ENCODE measurements at regions of chr1 and their contacts with region 1.

Region 1: DNA sequence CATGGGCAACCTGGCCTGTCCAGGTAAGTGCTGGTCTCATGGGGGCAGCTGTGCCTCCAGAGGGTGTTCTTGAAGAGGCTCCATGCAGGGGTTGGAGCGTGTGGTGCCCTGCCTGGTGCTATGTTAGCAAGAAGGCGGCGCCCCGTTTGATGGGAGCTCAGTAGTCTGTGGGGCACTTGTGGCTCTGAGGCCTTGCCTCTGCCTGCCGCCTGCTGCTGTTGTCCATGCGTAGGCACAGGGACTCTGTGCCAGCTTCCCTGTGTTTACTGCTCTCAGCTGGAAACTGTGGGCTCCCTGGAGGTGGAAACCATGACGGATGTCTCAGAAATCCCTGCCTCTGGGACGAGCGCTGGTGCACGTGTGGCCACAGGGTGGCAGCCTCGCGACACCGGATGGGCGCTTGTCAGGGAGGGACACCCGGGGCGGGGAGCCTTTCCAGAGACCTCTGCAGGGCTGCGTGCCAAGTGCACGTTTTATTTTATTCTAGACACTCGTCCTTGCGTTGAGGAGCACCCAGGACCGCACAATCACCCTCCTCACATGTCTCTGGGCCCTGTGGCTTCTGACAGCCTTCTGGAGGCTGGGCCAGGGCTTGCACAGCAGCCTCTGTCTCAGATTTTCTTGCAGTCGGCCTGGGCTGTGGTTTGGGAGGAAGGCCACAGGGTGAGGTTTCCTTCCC is 27.1 kb downstream of the SNAP47 start:
- DNase-seq: peak; percentile 87 to 92 (median 88)
- H3K4me3 ChIP-seq: peak overlapping the region; percentile 20 to 41
- H3K4me3 Mint-ChIP-seq: peak overlapping the region; percentile 60 to 89 (median 76)
- H3K27ac ChIP-seq: peak overlapping the region; percentile 46
- H3K27ac Mint-ChIP-seq: peak overlapping the region; percentile 89 to 95 (median 92)
- H3K4me1 ChIP-seq: peaks cover 89% of the 10 kb centered on the region
- H3K4me1 Mint-ChIP-seq: peaks cover 66 to 97% (median 77%) of the 10 kb centered on the region in 4 donors
- H3K27me3 ChIP-seq: no peaks in the 10 kb centered on the region
- H3K27me3 Mint-ChIP-seq: no peaks in the 10 kb centered on the region

Region 2: GRCh38 chr1:227778401-227778947 is 16.1 kb after region 1 on chr1:
- CTCF ChIA-PET with region 1: interaction called, 11 read pairs
- POLR2A ChIA-PET with region 1: interaction called, 10 read pairs
- intact Hi-C with region 1: no loop called
- DNase-seq: no peak
- H3K4me3 ChIP-seq: no peak overlapping the region
- H3K4me3 Mint-ChIP-seq: no peak overlapping the region
- H3K27ac ChIP-seq: no peak overlapping the region
- H3K27ac Mint-ChIP-seq: no peak overlapping the region
- H3K4me1 ChIP-seq: peaks cover 14% of the 10 kb centered on the region
- H3K4me1 Mint-ChIP-seq: peaks cover 11 to 23% (median 16%) of the 10 kb centered on the region in 4 donors
- H3K27me3 ChIP-seq: no peaks in the 10 kb centered on the region
- H3K27me3 Mint-ChIP-seq: no peaks in the 10 kb centered on the region

Region 3: DNA sequence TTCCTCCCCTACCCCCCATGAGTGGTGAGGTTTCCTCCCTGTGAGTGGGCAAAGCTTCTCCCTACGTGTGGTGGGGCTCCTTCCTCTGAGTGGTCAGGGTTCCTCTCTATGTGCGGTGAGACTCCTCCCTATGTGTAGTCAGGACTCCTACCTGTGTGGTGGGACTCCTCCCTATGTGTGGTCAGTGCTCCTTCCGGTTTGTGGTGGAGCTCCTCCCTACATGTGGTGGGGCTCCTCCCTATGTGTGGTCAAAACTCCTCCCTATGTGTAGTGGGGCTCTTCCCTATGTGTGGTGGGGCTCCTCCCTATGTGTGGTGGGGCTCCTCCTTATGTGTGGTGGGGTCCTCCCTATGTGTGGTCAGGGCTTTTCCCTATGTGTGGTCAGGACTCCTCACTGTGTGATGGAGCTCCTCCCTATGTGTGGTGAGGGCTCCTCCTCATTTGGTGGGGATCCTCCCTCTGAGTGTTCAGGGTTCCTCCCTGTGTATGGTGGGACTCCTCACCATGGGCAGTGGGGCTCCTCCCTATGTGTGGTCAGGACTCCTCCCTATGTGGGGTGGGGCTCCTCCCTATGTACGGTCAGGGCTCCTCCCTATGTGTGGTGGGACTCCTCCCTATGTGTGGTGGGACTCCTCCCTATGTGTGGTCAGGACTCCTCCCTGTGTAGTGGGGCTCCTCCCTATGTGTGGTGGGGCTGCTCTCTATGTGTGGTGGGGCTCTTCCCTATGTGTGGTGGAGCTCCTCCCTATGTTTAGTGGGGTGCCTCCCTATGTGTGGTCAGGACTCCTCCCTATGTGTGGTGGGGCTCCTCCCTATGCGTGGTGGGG is 82.2 kb after region 1 on chr1:
- CTCF ChIA-PET with region 1: interaction called, 18 read pairs
- POLR2A ChIA-PET with region 1: interaction called, 3 read pairs
- intact Hi-C with region 1: loop called (anchors 5 kb)
- DNase-seq: peak in 1 of 5 donors; percentile 4
- H3K4me3 ChIP-seq: no peak overlapping the region
- H3K4me3 Mint-ChIP-seq: no peak overlapping the region
- H3K27ac ChIP-seq: no peak overlapping the region
- H3K27ac Mint-ChIP-seq: peak overlapping the region in 5 of 7 donors; percentile 18 to 55 (median 47)
- H3K4me1 ChIP-seq: no peaks in the 10 kb centered on the region
- H3K4me1 Mint-ChIP-seq: peaks cover 0 to 4% (median 3%) of the 10 kb centered on the region in 4 donors
- H3K27me3 ChIP-seq: no peaks in the 10 kb centered on the region
- H3K27me3 Mint-ChIP-seq: peaks cover 1 to 3% of the 10 kb centered on the region in 2 donors

Region 4: DNA sequence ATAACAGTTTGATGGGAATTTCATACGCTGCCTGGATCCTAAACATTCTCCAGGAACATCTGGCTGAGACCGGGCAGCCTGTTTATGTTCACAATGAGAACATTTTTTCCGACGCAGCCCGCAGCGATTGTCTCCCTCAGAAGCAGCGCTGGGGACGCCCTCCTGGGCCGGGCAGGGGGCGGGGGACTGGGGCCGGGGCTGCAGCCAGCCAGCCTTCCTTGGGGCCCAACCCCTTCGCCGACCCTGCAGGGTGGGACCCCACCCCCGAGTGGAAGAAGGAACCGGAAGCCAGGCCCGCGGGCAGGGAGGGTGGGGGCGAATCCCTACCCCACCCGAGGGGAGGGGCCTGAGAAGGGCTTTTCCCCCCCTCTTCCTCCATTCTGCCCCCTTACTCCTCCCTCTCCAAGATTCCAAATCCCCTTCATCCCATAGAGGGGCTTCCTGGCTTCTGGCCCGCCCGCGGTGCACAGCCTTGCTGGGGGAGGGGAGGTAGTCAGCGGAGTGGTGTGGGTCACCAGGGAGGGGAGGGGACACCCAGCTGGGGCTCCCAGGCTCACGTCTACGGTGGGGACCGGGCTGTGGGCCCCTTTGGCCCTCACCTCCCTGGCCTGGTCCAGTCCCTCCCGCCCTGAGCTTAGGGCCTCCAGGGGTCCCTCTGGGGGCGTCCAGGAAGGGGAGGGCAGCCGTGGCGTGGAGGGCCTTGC is 124.8 kb after region 1 on chr1:
- CTCF ChIA-PET with region 1: interaction called, 6 read pairs
- POLR2A ChIA-PET with region 1: interaction called, 29 read pairs
- intact Hi-C with region 1: loop called (anchors 1 kb)
- DNase-seq: peak in 3 of 5 donors; percentile 18 to 29 (median 18)
- H3K4me3 ChIP-seq: peak overlapping the region in 1 of 2 donors; percentile 31
- H3K4me3 Mint-ChIP-seq: peak overlapping the region in 7 of 8 donors; percentile 42 to 68 (median 59)
- H3K27ac ChIP-seq: peak overlapping the region; percentile 40
- H3K27ac Mint-ChIP-seq: peak overlapping the region; percentile 68 to 92 (median 83)
- H3K4me1 ChIP-seq: peaks cover 54% of the 10 kb centered on the region
- H3K4me1 Mint-ChIP-seq: peaks cover 15 to 59% (median 38%) of the 10 kb centered on the region in 4 donors
- H3K27me3 ChIP-seq: no peaks in the 10 kb centered on the region
- H3K27me3 Mint-ChIP-seq: no peaks in the 10 kb centered on the region

Region 5: GRCh38 chr1:227913764-227914721 is 151.7 kb after region 1 on chr1:
- CTCF ChIA-PET with region 1: no interaction called
- POLR2A ChIA-PET with region 1: no interaction called
- intact Hi-C with region 1: no loop called
- DNase-seq: peak in 1 of 5 donors; percentile 38
- H3K4me3 ChIP-seq: no peak overlapping the region
- H3K4me3 Mint-ChIP-seq: no peak overlapping the region
- H3K27ac ChIP-seq: no peak overlapping the region
- H3K27ac Mint-ChIP-seq: no peak overlapping the region
- H3K4me1 ChIP-seq: no peaks in the 10 kb centered on the region
- H3K4me1 Mint-ChIP-seq: peaks cover 2 to 17% (median 5%) of the 10 kb centered on the region in 4 donors
- H3K27me3 ChIP-seq: no peaks in the 10 kb centered on the region
- H3K27me3 Mint-ChIP-seq: no peaks in the 10 kb centered on the region

Region 6: DNA sequence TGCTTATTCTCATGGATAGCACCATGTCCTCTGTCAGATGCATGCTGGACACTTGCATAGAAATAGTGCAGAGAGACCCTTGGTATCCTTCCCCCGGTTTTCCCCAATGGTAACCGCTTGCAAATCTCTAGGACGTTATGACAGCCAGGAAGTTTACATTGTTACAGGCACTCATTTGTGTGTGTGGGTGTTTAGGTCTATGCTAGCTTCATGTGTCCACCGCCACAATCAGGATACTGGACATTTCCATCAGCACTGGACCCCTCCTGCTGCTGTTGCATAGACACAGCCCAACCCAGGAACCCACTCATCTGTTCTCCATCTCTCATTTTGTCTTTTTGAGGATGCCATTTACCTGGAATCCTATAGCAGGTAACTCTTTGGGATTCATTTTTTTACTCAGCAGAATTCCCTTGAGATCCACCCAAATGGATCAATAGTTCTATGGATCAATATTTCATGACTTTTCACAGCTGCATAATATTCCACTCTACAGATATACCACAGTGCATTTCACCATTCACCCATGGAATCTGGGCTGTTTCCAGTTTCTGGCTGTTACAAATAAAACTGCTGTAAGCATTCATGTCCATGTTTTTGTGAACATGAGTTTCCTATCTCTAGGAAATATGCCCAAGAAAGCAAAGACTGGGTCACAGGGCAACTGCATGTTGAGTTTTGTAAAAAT is 191.9 kb after region 1 on chr1:
- CTCF ChIA-PET with region 1: interaction called, 206 read pairs
- POLR2A ChIA-PET with region 1: interaction called, 5 read pairs
- intact Hi-C with region 1: loop called (anchors 1 kb)
- DNase-seq: no peak
- H3K4me3 ChIP-seq: no peak overlapping the region
- H3K4me3 Mint-ChIP-seq: no peak overlapping the region
- H3K27ac ChIP-seq: no peak overlapping the region
- H3K27ac Mint-ChIP-seq: no peak overlapping the region
- H3K4me1 ChIP-seq: no peaks in the 10 kb centered on the region
- H3K4me1 Mint-ChIP-seq: peaks cover 0 to 7% (median 2%) of the 10 kb centered on the region in 4 donors
- H3K27me3 ChIP-seq: no peaks in the 10 kb centered on the region
- H3K27me3 Mint-ChIP-seq: peaks cover 15 to 35% of the 10 kb centered on the region in 2 donors